Colonic mucosa (tissue), 4 donors: ENCODE measurements at regions of chr14 and their contacts with region 1.

Region 1: GRCh38 chr14:20461274-20462001 is at the start of gene PIP4P1:
- DNase-seq: peak; percentile 99
- H3K4me3 ChIP-seq: peak within 1 kb of the TSS; percentile 91
- H3K27ac ChIP-seq: peak within 1 kb of the TSS; percentile 95
- H3K4me1 ChIP-seq: peaks cover 12% of the 10 kb centered on the region
- H3K27me3 ChIP-seq: no peaks in the 10 kb centered on the region
- CTCF ChIP-seq: no peak
- total RNA-seq, gene PIP4P1: 30.3 to 54.6 TPM

Region 2: DNA sequence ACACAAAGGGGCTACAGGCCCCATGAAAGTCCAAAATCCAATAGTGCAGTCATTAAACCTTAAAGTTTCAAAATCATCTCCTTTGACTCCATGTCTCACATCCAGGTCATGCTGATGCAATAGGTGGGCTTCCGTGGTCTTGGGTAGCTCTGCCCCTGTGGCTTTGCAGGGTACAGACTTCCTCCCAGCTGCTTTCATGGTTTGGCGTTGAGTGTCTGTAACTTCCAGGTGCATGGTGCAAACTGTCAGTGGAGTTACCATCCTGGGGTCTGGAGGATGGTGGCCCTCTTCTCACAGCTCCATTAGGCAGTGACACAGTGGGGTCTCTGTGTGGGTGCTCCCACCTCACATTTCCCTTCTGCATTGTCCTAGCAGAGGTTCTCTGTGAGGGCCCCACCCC is 468.0 kb before region 1 on chr14:
- intact Hi-C with region 1: no loop called
- DNase-seq: no peak
- H3K4me3 ChIP-seq: no peak overlapping the region
- H3K27ac ChIP-seq: no peak overlapping the region
- H3K4me1 ChIP-seq: no peaks in the 10 kb centered on the region
- H3K27me3 ChIP-seq: no peaks in the 10 kb centered on the region
- CTCF ChIP-seq: no peak

Region 3: DNA sequence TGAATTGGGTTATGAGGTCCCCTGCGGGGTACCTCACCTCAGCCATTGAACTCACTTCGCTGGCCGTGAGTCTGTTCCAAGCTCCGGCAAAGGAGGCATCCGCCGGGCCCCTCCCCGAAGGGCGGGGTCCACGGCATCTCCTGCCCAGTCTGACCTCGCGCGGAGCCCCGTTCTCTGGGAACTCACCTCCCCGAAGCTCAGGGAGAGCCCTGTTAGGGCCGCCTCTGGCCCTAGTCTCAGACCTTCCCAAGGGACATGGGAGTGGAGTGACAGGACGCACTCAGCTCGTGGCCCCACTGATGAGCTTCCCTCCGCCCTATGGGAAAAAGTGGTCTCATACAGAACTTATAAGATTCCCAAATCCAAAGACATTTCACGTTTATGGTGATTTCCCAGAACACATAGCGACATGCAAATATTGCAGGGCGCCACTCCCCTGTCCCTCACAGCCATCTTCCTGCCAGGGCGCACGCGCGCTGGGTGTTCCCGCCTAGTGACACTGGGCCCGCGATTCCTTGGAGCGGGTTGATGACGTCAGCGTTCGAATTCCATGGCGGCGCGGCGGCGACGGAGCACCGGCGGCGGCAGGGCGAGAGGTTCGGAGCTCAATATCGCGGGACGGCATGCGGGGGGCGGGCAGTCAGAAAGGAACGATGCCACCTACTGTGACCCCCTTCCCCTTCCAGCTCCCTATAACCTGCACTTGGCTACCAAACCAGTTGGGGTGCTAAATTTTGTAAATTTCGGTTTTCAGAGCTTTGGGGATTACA is 118.2 kb before region 1 on chr14 and contains the start of gene PARP2:
- intact Hi-C with region 1: loop called (anchors 10 kb)
- DNase-seq: peak; percentile 97
- H3K4me3 ChIP-seq: peak within 1 kb of the TSS; percentile 66
- H3K27ac ChIP-seq: peak within 1 kb of the TSS; percentile 87
- H3K4me1 ChIP-seq: no peaks in the 10 kb centered on the region
- H3K27me3 ChIP-seq: no peaks in the 10 kb centered on the region
- CTCF ChIP-seq: no peak
- total RNA-seq, gene PARP2: 12.5 to 23.7 TPM

Region 4: DNA sequence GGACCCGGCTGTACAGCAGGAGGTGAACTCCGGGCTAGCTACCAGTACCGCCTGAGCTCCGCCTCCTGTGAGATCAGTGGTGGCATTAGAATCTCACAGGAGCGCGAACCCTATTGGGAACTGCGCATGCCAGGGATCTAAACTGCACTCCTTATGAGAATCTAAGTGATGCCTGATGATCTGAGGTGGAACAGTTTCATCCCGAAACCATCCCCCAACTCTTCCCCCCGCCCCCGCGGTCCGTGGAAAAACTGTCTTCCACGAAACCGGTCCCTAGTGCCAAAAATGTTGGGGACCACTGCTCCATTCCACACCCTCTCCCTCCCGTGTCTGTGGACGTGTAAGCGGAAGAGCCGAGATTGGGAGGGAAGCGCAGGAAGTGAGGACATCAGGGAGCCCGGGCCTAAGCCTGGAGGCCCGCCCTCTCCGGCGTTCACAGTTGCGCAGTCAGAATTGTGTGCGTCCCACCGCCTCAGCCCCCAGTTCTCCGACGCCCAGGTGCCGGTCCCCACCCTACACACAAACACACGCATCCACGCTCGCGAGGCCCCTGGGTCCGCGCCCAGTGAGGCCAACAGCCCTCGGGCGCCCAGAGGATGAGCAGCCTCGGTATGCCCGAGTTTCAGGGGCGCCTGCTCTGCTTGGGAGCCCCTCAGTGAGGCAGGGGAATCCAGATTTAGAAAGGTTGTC is 221.1 kb after region 1 on chr14:
- intact Hi-C with region 1: loop called (anchors 10 kb)
- DNase-seq: peak; percentile 89
- H3K4me3 ChIP-seq: peak overlapping the region; percentile 53
- H3K27ac ChIP-seq: peak overlapping the region; percentile 100
- H3K4me1 ChIP-seq: peaks cover 7% of the 10 kb centered on the region
- H3K27me3 ChIP-seq: no peaks in the 10 kb centered on the region
- CTCF ChIP-seq: no peak